Heart right ventricle (tissue), 16 donors: ENCODE measurements at regions of chr1 and their contacts with region 1.

Region 1: DNA sequence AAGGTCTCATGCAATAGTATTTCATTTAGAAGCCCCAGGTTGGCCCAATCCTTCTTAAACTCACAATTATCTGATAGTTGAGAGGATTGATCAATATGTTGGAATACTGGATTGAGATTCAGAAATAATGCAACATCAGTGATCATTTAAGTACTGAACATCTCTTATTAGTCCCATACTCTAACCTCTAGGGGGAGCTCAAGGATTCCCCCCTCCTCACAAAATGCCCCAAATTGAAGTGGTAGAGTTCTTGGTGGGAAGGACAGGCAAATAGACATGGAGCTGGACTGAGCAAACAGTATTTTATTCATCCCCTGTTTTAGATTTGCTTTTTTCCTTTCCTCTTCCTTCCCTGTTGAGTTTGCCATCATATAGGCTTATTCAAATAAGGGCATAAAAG is 62.8 kb downstream of the NGF start:
- DNase-seq: no peak
- ATAC-seq: no peak
- H3K4me3 ChIP-seq: no peak overlapping the region
- H3K27ac ChIP-seq: peak overlapping the region in 4 of 10 donors; percentile 38 to 57 (median 44)
- H3K4me1 ChIP-seq: peaks cover 0 to 13% (median 0%) of the 10 kb centered on the region in 9 donors
- H3K27me3 ChIP-seq: no peaks in the 10 kb centered on the region
- CTCF ChIP-seq: peak; percentile 14 to 59 (median 38)

Region 2: DNA sequence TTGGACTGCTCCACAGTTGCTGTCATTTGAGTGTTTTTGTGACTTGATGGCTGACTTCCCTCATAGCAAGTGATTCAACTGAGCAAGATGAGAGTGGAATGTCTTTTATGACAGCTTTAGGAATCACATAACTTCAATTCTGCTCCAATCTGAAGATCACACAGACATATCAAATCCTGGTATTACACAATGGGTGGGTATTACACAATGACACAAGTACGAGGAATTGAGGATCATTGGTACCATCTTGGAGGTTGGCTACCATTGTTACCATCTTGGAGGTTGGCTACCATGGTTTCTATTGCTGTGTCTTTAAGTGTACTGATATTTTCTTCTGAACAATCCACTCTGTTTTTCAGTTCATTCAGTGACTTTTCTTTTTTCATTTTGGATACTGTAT is 254.1 kb before region 1 on chr1:
- intact Hi-C with region 1: no loop called
- DNase-seq: no peak
- ATAC-seq: no peak
- H3K4me3 ChIP-seq: no peak overlapping the region
- H3K27ac ChIP-seq: no peak overlapping the region
- H3K4me1 ChIP-seq: no peaks in the 10 kb centered on the region
- H3K27me3 ChIP-seq: peaks cover 0 to 6% (median 0%) of the 10 kb centered on the region in 7 donors
- CTCF ChIP-seq: no peak

Region 3: DNA sequence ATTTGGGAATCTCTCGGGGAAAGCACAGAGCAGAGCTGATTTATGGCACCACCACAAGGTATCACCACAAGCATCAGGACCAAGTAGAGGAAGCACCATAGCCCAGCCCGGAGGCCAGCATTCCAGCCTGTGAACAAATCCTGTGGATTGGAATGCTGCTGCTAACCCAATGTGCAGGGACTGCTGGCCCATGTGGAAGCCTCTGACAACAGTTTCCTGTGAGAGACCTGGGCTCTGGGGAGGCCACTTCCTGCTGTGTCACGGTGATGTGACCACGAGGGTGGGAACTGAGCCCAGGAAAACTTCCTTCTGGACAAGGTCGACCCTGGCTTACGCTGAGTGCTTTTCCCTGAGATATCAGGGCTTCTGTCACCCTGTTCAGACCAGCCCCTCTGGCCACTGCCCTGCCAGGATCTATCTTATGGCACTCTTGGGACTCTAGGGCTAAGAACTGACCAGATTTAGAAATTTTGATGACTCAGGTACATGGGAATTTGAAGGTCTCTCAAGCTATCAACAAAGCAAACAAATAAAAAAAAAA is 151.1 kb after region 1 on chr1:
- intact Hi-C with region 1: loop called in 1 of 10 experiments (anchors 10 kb)
- DNase-seq: peak; percentile 67 to 87
- ATAC-seq: peak; percentile 90 to 97 (median 95)
- H3K4me3 ChIP-seq: no peak overlapping the region
- H3K27ac ChIP-seq: peak overlapping the region in 9 of 10 donors; percentile 23 to 75 (median 64)
- H3K4me1 ChIP-seq: peaks cover 0 to 17% (median 4%) of the 10 kb centered on the region in 9 donors
- H3K27me3 ChIP-seq: peaks cover 0 to 3% (median 0%) of the 10 kb centered on the region in 7 donors
- CTCF ChIP-seq: no peak

Region 4: DNA sequence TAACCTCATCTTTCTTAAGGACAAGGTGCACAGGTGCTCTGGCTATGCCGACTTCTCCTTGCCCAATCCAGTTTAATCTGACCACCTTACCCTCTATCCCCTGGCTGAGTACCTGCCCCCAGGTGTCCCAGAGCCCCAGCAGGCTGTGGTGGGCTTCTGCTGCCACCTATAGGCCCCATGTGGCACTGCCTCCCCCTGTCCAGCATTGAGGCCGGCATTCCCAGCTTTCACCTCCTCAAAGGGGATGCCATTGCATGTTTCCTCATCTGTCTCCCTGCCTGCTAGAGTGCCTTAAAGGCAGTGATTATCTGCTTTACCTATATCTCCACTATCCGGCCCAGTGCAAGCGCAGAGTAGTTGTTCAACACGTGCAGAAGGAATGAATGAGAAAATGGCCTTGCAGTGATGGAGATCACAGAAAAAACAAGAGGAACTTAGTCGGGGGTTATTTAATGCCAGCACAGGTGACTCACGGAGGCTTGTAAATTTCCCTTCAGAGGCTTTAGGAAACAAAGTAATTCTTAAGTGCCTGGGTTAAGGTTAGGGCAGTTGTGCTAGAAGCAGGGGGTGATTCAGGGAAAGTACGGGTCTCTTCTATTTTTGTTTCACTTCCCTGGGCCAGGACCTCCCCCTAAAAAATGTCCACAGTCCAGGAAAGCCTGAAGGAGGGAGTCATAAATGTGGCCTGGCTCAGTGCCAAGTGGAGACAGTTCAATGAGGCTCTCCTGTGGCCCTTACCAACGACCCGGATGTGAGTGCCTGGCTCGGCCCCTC is 194.7 kb after region 1 on chr1:
- intact Hi-C with region 1: loop called in 3 of 10 experiments (anchors 10 kb)
- DNase-seq: peak; percentile 22 to 42
- ATAC-seq: peak in 7 of 8 donors; percentile 38 to 67 (median 58)
- H3K4me3 ChIP-seq: no peak overlapping the region
- H3K27ac ChIP-seq: no peak overlapping the region
- H3K4me1 ChIP-seq: peaks cover 0 to 14% (median 0%) of the 10 kb centered on the region in 9 donors
- H3K27me3 ChIP-seq: peaks cover 0 to 4% (median 0%) of the 10 kb centered on the region in 7 donors
- CTCF ChIP-seq: peak; percentile 66 to 89 (median 83)

Region 5: DNA sequence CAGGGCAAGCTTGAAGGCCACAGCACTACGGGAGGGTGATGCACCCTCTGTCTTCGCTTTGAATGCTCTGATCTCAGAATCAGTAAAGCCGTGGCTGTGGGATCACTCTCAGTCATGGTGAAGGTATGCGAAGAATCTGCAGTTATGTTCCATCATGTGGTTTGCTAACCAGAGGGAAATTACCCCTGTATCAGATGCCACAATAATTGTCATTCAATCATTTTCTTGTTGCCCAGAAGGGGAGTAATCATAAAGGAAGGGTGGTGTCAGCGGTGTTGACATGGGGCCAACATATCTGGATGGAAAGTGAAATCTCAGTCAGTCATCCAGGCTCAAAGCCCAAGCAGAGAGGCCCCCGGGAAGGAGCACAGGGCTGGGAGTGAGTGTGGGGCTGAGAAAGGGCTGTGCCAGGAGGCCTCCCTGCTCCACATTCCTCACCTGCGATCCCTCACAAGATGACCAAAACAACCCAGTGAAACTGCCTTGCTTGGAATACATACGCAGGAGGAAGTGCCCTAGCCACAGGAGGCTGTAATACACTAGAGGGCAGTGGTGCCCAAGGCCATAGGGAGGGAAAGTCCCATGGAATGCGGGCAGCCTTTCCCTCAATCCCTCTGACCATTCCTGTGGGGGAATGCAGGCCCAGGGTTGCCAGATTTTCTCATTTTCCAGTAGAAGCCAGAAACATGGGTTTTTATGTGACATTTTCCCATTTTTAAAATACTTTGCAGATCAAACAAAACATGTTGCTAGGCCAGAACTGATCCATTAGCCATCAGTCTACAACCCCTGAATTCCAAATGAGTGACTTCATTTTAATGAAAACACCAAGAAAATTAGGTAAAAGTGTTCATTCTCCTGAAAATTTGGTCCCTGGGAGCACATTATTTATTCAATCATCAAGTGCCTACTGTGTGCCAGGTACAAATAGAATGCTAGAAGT is 270.9 kb after region 1 on chr1:
- intact Hi-C with region 1: no loop called
- DNase-seq: peak in 1 of 2 donors; percentile 36
- ATAC-seq: peak; percentile 61 to 88 (median 85)
- H3K4me3 ChIP-seq: no peak overlapping the region
- H3K27ac ChIP-seq: peak overlapping the region in 4 of 10 donors; percentile 7 to 28 (median 23)
- H3K4me1 ChIP-seq: peaks cover 0 to 19% (median 10%) of the 10 kb centered on the region in 9 donors
- H3K27me3 ChIP-seq: no peaks in the 10 kb centered on the region
- CTCF ChIP-seq: peak; percentile 17 to 65 (median 57)